IMR-90 (cell line): ENCODE measurements at regions of chr14 and their contacts with region 1.

Region 1: DNA sequence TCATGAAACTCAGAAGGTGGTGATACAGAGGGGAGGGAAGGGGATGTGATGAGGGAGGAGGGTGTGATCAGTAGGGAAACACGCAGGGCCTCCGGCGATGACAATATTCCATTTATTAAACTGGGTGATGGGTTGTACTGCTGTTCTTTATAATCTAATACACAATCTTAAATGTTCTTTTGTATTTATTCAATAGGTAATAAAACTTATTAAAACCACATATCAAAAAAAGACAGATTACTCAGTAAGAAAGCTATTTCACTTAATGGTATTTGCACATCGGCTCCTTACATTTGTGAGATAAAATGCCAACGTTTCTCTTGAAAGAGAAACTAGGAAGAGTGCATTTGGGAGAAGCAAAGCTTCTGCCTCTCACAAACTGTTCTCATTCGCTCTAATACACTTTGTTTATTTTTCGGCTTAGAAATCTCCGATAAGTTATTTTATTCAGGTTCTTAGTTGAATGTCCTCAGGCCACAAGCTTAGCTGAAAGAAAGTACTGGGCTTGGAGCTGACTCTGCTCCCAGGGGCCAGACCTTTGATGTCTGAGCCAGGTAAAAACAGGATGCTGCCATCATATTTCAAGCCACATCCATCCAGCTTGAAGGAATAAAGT is 17.5 kb downstream of the STON2 start:
- DNase-seq: no peak
- ATAC-seq: no peak
- H3K4me3 ChIP-seq: no peak overlapping the region
- H3K27ac ChIP-seq: no peak overlapping the region
- H3K4me1 ChIP-seq: no peaks in the 10 kb centered on the region
- H3K27me3 ChIP-seq: no peaks in the 10 kb centered on the region
- CTCF ChIP-seq: no peak
- POLR2A ChIP-seq: no peak
- RAD21 ChIP-seq: no peak

Region 2: DNA sequence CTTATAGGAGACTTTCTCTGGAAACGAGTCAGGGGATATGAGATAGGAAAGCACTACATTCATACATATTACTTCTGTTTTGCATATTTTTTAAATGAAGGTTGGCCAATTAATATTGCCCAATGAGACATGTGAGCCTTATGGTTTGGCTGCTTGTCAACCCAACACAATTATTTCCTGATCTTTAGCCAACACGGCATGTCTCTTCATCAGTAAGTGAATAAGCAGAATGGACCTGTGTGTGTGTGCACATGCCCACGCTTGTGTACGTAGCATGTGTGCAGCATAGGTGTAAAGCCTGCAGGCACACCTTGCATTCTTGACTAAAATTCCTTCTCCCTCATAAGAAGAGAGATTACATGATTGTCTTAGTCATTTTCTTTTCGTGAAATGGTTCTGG is 70.8 kb before region 1 on chr14:
- CTCF ChIA-PET with region 1: no interaction called
- POLR2A ChIA-PET with region 1: no interaction called
- dilution Hi-C with region 1: no loop called
- in situ Hi-C with region 1: no loop called
- intact Hi-C with region 1: loop called (anchors 2 kb)
- DNase-seq: no peak
- ATAC-seq: no peak
- H3K4me3 ChIP-seq: no peak overlapping the region
- H3K27ac ChIP-seq: no peak overlapping the region
- H3K4me1 ChIP-seq: no peaks in the 10 kb centered on the region
- H3K27me3 ChIP-seq: no peaks in the 10 kb centered on the region
- CTCF ChIP-seq: no peak
- POLR2A ChIP-seq: no peak
- RAD21 ChIP-seq: no peak